ENCODE measurements at regions of chr6 and their contacts with region 1.

Region 1: DNA sequence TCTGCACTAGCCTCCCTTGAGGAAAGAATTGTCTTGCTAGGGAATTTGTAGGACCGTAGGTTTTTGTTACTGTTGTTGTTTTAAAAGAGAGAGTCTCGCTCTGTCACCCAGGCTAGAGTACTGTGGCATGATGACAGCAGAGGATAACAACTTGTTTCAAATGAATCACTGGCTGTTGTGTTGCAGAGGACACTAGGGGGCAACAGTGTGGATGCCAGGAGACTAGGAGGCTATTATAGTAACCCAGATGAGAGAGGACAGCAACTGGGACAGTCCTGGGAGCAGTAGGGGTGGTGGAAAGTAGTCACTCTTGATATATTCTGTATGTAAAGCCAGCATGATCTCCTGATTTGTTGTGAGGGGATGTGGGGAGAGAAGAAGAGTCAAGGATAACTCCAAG is 41.8 kb upstream of the LAMA4 start:
- DNase-seq: no peak
- H3K4me3 ChIP-seq: no peak overlapping the region
- H3K27me3 ChIP-seq: no peaks in the 10 kb centered on the region
- CTCF ChIP-seq: peak; percentile 61

Region 2: GRCh38 chr6:111259089-111259831 is 1036.9 kb before region 1 on chr6:
- CTCF ChIA-PET with region 1: no interaction called
- POLR2A ChIA-PET with region 1: no interaction called
- DNase-seq: peak; percentile 95
- H3K4me3 ChIP-seq: peak overlapping the region; percentile 74
- H3K27me3 ChIP-seq: peaks cover 2% of the 10 kb centered on the region; the same call in 1 of the 2 replicates
- CTCF ChIP-seq: peak; percentile 94

Region 3: GRCh38 chr6:112163295-112164257 is 132.5 kb before region 1 on chr6:
- CTCF ChIA-PET with region 1: no interaction called
- POLR2A ChIA-PET with region 1: no interaction called
- DNase-seq: no peak
- H3K4me3 ChIP-seq: no peak overlapping the region
- H3K27me3 ChIP-seq: no peaks in the 10 kb centered on the region
- CTCF ChIP-seq: peak; percentile 85

Region 4: DNA sequence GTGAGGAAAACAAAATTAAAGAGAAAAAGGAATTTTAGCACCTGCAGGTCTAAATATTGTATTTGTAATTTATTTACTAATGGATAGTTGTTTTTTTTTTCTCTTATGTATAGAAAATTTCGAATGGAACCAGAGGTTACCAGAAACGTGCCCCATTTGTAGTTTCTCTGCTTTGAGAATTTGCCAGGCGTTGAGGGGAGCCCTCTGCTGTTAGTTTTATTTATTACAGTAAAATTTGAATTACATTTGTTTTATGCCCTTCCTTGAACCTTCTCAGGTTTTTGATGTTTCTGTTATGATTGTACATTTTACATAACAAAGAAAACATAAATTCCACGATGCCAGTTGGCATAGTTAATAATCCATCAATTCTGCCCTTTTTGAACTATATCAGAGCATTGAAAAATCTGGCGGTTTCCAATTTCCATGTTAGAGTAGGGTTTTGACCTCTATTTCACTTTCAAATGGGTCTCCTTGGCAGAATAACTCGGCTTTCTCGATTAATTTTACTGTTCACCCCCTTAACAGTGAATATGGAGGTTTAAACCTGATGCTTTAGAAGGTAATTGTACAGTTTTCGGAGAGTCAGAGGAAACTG is 15.9 kb after region 1 on chr6:
- CTCF ChIA-PET with region 1: interaction called, 11 read pairs
- POLR2A ChIA-PET with region 1: interaction called, 3 read pairs
- DNase-seq: no peak
- H3K4me3 ChIP-seq: no peak overlapping the region
- H3K27me3 ChIP-seq: no peaks in the 10 kb centered on the region
- CTCF ChIP-seq: peak; percentile 63